Activated CD4-positive, alpha-beta T cell treated with anti-CD3 and anti-CD28 coated beads for 36 hours (primary cell): ENCODE measurements at regions of chr11 and their contacts with region 1.

Region 1: GRCh38 chr11:1694064-1694845 is 2.7 kb upstream of the KRTAP5-6 start:
- DNase-seq: peak; percentile 91
- ATAC-seq: peak; percentile 91
- H3K4me3 Mint-ChIP-seq: no peak overlapping the region
- H3K27ac Mint-ChIP-seq: no peak overlapping the region
- H3K4me1 Mint-ChIP-seq: peaks cover 5% of the 10 kb centered on the region
- H3K27me3 Mint-ChIP-seq: peaks cover 14% of the 10 kb centered on the region

Region 2: DNA sequence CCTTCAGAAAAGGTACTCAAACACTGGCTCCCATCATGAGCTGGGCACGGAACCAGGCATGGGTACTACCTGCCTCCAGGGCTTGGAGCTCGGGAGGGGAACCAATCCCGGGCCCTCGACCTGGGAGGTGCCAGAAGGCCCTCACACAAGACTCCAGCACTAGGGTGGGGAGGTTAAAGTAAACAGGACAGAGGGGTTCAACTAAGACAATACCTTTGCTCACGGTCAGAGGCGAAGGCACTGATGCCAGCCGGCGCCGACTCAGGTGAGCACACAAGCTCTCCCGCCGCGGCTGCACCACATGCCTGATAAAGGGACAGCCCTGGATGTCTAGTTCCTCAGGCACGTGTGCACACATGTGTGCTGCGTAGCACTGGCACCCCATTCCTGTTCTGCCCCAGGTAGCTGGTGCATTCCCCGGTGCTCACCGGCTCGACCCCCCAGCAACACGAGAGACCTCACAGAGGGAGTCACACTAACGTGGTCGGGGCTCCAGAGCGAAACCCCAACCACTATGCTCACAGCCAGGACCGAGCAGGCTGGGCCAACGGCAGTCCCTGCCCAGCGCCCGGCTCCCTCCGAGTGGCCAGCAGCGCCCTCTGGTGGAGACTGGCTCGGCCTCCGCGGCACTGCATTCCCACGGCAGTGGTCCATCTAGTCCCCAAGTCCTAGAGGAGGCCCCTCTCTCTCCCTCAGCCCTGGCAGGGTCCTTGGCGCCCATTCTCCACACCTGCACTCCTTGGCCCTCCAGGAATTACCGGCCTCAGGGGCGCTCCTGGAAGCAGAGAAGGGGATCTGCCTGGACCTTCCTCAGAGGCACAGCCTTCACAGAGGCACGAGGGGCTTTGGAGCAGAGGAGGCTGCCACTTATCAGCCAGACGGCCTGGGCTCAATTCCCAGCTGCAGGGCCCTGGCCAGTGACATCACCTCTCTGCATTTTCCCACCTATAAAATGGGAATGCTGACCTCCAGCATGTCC is 178.9 kb before region 1 on chr11:
- CTCF ChIA-PET with region 1: no interaction called
- POLR2A ChIA-PET with region 1: no interaction called
- intact Hi-C with region 1: no loop called
- DNase-seq: peak; percentile 88
- ATAC-seq: peak; percentile 86
- H3K4me3 Mint-ChIP-seq: no peak overlapping the region
- H3K27ac Mint-ChIP-seq: no peak overlapping the region
- H3K4me1 Mint-ChIP-seq: peaks cover 44% of the 10 kb centered on the region
- H3K27me3 Mint-ChIP-seq: no peaks in the 10 kb centered on the region

Region 3: GRCh38 chr11:1652771-1653540 is 41.3 kb before region 1 on chr11:
- CTCF ChIA-PET with region 1: interaction called, 73 read pairs
- POLR2A ChIA-PET with region 1: no interaction called
- intact Hi-C with region 1: loop called (anchors 1 to 5 kb)
- DNase-seq: peak; percentile 86
- ATAC-seq: peak; percentile 91
- H3K4me3 Mint-ChIP-seq: no peak overlapping the region
- H3K27ac Mint-ChIP-seq: no peak overlapping the region
- H3K4me1 Mint-ChIP-seq: no peaks in the 10 kb centered on the region
- H3K27me3 Mint-ChIP-seq: peaks cover 3% of the 10 kb centered on the region

Region 4: DNA sequence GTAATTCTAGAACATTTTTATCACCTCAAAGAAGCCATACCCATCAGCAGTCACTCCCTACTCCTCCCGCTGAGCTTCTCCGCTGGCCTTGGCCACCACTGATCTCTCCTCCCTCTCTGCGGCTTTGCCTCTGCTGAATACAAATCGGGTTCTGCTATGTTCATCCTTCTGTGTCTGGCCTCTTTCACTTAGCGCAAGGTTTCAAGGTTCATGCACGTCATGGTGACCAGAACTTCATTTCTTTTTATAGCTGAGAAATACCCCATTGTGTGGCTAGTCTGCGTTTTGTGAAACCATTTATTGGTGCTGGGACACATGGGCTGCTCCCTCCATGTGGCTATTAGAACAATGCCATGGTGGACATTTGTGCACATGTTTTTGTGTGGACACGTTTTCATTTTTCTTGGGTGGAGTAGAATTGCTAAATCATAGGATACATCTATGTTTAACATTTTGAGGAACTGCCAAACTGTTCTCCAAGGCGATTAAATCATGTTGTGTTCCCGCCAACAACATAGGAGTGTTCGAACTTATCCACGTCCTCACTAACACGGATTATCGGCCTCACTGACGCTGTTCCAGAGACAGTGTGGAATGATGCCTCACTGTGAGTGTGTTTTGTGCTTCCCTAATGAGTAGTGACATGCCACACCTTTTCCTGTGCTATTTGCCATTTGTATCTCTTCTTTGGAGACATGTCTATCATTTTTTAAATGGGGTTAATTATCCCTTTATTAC is 21.5 kb before region 1 on chr11:
- CTCF ChIA-PET with region 1: no interaction called
- POLR2A ChIA-PET with region 1: no interaction called
- intact Hi-C with region 1: no loop called
- DNase-seq: no peak
- ATAC-seq: no peak
- H3K4me3 Mint-ChIP-seq: no peak overlapping the region
- H3K27ac Mint-ChIP-seq: no peak overlapping the region
- H3K4me1 Mint-ChIP-seq: no peaks in the 10 kb centered on the region
- H3K27me3 Mint-ChIP-seq: peaks cover 34% of the 10 kb centered on the region

Region 5: GRCh38 chr11:1706634-1707400 is 12.6 kb after region 1 on chr11:
- CTCF ChIA-PET with region 1: interaction called, 16 read pairs
- POLR2A ChIA-PET with region 1: no interaction called
- intact Hi-C with region 1: no loop called
- DNase-seq: peak; percentile 51
- ATAC-seq: peak; percentile 57
- H3K4me3 Mint-ChIP-seq: no peak overlapping the region
- H3K27ac Mint-ChIP-seq: no peak overlapping the region
- H3K4me1 Mint-ChIP-seq: peaks cover 14% of the 10 kb centered on the region
- H3K27me3 Mint-ChIP-seq: no peaks in the 10 kb centered on the region

Region 6: DNA sequence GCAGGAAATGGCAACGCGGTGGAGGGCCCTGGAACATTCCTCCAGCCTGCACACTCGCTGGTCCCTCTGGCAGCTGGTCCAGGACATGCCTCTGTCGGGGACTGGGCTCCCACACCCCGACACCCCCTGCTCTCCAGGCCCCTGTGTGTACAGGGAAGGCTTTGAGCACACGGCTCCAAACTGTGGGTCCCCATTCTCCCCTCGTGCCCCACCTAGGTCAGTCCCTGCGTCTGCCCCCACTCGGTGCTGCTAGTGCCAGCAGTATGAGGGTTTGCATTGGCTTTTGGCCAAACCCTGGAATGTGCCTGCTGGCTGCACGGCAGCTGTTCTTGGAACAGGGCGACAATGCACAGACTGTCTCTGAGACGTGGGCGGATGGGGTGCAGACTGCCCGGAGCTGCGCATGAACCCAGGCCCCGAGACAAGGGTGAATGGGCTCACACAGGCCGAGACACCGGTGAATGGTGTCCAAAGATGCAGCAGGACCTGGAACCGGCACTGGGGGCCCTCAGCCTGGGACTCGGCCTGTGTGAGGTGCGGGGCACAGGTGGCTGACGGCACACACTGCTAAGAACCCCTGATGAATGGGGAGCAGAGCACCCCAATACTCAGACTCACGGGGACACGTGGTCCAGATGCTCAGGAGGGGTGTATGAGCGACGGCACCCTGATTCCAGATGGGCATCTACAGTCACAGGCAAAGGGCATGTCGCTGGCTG is 133.0 kb after region 1 on chr11:
- CTCF ChIA-PET with region 1: interaction called, 181 read pairs
- POLR2A ChIA-PET with region 1: no interaction called
- intact Hi-C with region 1: loop called (anchors 1 kb)
- DNase-seq: no peak
- ATAC-seq: no peak
- H3K4me3 Mint-ChIP-seq: no peak overlapping the region
- H3K27ac Mint-ChIP-seq: no peak overlapping the region
- H3K4me1 Mint-ChIP-seq: no peaks in the 10 kb centered on the region
- H3K27me3 Mint-ChIP-seq: no peaks in the 10 kb centered on the region

Region 7: DNA sequence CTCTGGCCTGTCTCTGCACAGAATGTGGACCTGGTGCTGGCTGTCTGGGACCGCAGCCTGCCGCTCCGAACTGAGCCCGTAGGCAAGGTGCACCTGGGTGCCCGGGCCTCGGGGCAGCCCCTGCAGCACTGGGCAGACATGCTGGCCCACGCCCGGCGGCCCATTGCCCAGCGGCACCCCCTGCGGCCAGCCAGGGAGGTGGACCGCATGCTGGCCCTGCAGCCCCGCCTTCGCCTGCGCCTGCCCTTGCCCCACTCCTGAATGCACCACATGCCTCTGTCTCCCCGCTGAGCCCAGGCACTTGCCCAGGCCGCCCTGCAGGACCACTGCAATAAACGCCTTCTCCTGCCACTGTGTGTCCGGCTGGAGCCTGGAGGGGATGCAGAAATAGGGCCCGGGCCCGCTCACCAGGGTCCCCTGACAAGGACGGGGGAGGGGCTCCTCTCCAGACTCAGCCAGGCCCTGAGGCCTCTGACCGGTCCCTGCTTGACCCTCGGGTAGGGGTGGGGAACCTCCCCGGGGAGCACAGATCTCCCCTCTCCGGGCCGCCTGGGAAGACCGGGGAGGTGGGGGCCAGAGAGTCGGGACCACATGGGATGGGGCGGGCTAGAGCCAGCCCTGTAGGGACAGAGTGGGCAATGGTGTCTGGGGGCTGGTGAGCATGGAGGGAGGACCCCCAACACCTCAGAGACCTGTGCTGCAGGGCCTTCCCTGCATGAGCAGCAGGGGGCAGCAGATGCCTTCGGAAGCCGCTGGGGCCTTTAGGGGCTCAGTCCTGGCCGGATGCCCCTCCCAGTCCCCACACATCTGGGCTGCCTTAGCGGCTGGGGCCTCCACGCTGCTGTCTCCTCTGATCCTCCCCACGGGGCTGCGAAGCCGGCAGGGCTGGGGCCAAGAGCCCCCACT is 143.2 kb after region 1 on chr11:
- CTCF ChIA-PET with region 1: interaction called, 181 read pairs
- POLR2A ChIA-PET with region 1: interaction called, 3 read pairs
- intact Hi-C with region 1: loop called (anchors 1 kb)
- DNase-seq: peak; percentile 89
- ATAC-seq: peak; percentile 91
- H3K4me3 Mint-ChIP-seq: no peak overlapping the region
- H3K27ac Mint-ChIP-seq: no peak overlapping the region
- H3K4me1 Mint-ChIP-seq: no peaks in the 10 kb centered on the region
- H3K27me3 Mint-ChIP-seq: no peaks in the 10 kb centered on the region

Region 8: DNA sequence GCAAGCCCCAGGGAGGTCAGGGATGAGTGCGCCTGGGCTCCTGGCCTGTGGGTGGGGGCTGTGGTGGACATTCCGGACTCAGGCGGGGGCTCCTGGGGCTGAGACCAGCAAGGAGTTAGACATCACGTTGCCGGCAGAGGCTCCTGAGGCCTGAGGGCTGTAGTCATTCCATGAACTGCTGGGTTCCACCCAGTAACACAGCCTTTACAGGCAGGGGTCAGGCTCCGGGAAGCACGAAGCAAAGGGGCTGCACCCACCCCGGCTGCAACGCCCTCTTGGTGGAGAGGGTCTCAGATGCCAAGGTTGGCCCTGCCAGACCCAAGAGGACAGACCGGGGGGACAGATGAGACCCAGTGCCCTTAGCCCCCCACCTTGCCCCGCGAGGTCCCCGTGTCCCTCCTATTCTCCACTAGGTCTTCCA is 234.2 kb after region 1 on chr11:
- CTCF ChIA-PET with region 1: no interaction called
- POLR2A ChIA-PET with region 1: no interaction called
- intact Hi-C with region 1: no loop called
- DNase-seq: no peak
- ATAC-seq: no peak
- H3K4me3 Mint-ChIP-seq: no peak overlapping the region
- H3K27ac Mint-ChIP-seq: no peak overlapping the region
- H3K4me1 Mint-ChIP-seq: peaks cover 7% of the 10 kb centered on the region
- H3K27me3 Mint-ChIP-seq: peaks cover 14% of the 10 kb centered on the region

Region 9: GRCh38 chr11:2002807-2003206 is 308.6 kb after region 1 on chr11:
- CTCF ChIA-PET with region 1: interaction called, 32 read pairs
- POLR2A ChIA-PET with region 1: no interaction called
- intact Hi-C with region 1: no loop called
- DNase-seq: no peak
- ATAC-seq: peak; percentile 63
- H3K4me3 Mint-ChIP-seq: no peak overlapping the region
- H3K27ac Mint-ChIP-seq: no peak overlapping the region
- H3K4me1 Mint-ChIP-seq: no peaks in the 10 kb centered on the region
- H3K27me3 Mint-ChIP-seq: no peaks in the 10 kb centered on the region